Motor neuron (in vitro differentiated cells): ENCODE measurements at regions of chr19 and their contacts with region 1.

Region 1: GRCh38 chr19:48637170-48637947 is at the start of gene DBP:
- ATAC-seq: peak; percentile 73 to 83 (median 79)
- H3K4me3 ChIP-seq: peak within 1 kb of the TSS; percentile 45 to 68 (median 59)
- H3K27ac ChIP-seq: peak within 1 kb of the TSS; percentile 93 to 95
- H3K4me1 ChIP-seq: peaks cover 23% of the 10 kb centered on the region in 2 donors
- total RNA-seq, gene DBP: 3.3 to 19.6 (median 10.4) TPM

Region 2: GRCh38 chr19:48391107-48391986 is 246.0 kb before region 1 on chr19 and contains the start of gene KDELR1:
- in situ Hi-C with region 1: no loop called
- ATAC-seq: peak; percentile 47 to 70 (median 52)
- H3K4me3 ChIP-seq: peak within 1 kb of the TSS; percentile 75 to 99 (median 93)
- H3K27ac ChIP-seq: peak within 1 kb of the TSS; percentile 86 to 94
- H3K4me1 ChIP-seq: peaks cover 24 to 29% of the 10 kb centered on the region in 2 donors
- total RNA-seq, gene KDELR1: 79.6 to 120 (median 96.8) TPM

Region 3: DNA sequence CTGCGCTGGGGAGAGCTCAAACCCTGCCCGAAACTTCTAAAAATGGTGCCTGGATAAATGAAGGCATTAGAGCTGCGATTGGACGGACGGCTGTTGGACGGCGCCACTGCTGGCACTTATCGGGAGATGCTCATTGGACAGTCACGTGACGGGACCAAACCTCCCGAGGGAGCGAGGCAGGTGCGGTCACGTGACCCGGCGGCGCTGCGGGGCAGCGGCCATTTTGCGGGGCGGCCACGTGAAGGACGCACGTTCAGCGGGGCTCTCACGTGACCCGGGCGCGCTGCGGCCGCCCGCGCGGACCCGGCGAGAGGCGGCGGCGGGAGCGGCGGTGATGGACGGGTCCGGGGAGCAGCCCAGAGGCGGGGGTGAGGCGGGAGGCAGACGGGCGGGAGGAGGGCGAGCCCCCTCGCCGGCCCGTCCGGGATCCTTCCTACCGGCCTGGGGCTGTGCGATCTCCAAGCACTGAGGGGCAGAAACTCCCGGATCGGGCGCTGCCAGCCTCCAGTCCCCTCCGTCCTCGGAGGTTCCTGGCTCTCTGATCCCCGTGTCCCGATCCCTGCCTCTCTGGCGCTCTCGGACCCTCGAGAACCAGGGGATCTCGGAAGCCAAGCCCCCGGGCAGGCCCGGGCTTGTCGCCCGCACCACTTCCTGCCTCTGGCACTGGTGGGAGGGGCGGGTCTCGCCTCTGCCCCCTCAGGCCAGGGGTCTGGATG is 317.4 kb after region 1 on chr19 and contains the start of gene BAX:
- in situ Hi-C with region 1: loop called in 1 of 9 experiments (anchors 25 kb)
- ATAC-seq: peak; percentile 81 to 95 (median 93)
- H3K4me3 ChIP-seq: peak within 1 kb of the TSS; percentile 62 to 94 (median 78)
- H3K27ac ChIP-seq: peak within 1 kb of the TSS; percentile 49 to 83
- H3K4me1 ChIP-seq: peaks cover 6% of the 10 kb centered on the region in 2 donors
- total RNA-seq, gene BAX: 36.9 to 172 (median 97.8) TPM